ENCODE measurements at regions of chr2 and their contacts with region 1.

Region 1: DNA sequence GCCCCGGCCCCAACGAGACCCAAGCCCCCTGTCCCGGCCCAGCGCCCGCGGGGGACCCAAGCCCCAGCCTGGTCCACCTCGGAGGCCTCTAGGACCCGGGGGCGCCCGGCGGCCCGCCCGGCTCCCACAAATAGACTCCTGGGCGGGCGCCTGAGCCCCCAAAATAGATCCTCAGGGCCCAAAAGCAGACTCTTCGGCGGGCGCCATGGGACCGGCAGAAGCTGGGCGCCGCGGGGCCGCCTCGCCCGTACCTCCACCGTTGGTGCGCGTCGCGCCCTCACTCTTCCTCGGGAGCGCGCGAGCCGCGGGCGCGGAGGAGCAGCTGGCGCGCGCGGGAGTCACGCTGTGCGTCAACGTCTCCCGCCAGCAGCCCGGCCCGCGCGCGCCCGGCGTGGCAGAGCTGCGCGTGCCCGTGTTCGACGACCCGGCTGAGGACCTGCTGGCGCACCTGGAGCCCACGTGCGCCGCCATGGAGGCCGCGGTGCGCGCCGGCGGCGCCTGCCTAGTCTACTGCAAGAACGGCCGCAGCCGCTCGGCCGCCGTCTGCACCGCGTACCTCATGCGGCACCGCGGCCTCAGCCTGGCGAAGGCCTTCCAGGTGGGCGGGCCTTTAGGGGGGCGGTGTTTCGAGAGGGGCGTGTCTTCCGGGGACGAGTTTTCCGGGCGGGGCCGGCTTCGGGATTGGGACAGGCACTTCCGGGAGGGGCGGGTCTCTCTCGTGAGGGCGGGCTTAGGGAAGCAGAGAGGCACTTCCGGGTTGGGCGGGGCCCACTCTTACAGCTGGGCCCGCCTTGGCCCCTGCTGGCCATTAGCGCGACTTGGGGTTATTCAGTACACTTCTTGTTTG is 546 bp downstream of the DUSP28 start:
- DNase-seq: peak in 13 of 14 experiments; percentile 99 to 100 (median 100)
- ATAC-seq: peak; percentile 50
- H3K4me3 ChIP-seq: peak overlapping the region; percentile 53
- H3K4me3 Mint-ChIP-seq: peak overlapping the region; percentile 90
- H3K27ac ChIP-seq: peak overlapping the region; percentile 62 to 95
- H3K27ac Mint-ChIP-seq: peak overlapping the region; percentile 98
- H3K4me1 ChIP-seq: peaks cover 87% of the 10 kb centered on the region
- H3K4me1 Mint-ChIP-seq: peaks cover 80% of the 10 kb centered on the region
- H3K27me3 ChIP-seq: no peaks in the 10 kb centered on the region
- H3K27me3 Mint-ChIP-seq: no peaks in the 10 kb centered on the region
- CTCF ChIP-seq: no peak

Region 2: DNA sequence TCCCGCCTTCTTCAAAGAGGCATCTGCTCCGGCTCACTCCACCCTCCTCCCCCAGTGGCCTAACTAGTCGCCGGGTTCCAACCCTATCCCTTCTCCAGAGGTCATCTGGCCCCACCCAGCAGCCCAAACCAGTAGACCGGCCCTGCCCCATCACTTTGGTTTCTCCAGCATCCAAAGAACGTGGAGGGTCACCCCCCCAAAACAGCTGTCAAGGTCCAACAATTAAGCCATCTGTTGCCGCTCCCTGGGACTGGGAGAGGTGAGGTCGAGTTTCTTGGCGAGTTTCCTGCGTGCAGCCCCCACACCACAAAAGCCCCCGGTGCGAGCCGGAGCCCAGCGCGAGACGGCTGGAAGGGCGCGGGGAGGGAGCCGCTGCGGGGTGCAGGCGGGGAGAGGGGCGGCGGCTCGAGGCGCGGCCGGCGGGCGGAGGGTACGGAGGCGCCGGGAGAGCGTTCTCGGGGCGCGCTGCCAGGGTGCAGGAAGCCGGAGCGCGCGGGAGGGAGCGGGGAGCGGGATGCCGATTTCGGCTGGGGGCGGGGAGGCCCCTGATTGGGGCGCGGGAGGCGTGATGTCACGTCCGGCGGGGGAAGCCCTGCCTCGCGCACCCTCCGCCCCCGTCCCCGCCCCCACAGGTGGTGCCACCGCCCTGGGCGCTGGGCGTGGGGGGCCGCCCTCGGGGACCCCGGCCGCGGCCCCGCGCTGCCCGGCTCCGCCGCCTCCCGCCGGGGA is 125.8 kb before region 1 on chr2:
- CTCF ChIA-PET with region 1: no interaction called
- POLR2A ChIA-PET with region 1: no interaction called
- intact Hi-C with region 1: loop called in 1 of 2 experiments (anchors 5 kb)
- DNase-seq: peak; percentile 76 to 95 (median 89)
- ATAC-seq: peak; percentile 83
- H3K4me3 ChIP-seq: peak overlapping the region; percentile 51
- H3K4me3 Mint-ChIP-seq: peak overlapping the region; percentile 93
- H3K27ac ChIP-seq: no peak overlapping the region
- H3K27ac Mint-ChIP-seq: peak overlapping the region; percentile 61
- H3K4me1 ChIP-seq: peaks cover 25% of the 10 kb centered on the region
- H3K4me1 Mint-ChIP-seq: peaks cover 4% of the 10 kb centered on the region
- H3K27me3 ChIP-seq: peaks cover 22 to 27% of the 10 kb centered on the region in 2 experiments
- H3K27me3 Mint-ChIP-seq: peaks cover 22% of the 10 kb centered on the region
- CTCF ChIP-seq: no peak

Region 3: DNA sequence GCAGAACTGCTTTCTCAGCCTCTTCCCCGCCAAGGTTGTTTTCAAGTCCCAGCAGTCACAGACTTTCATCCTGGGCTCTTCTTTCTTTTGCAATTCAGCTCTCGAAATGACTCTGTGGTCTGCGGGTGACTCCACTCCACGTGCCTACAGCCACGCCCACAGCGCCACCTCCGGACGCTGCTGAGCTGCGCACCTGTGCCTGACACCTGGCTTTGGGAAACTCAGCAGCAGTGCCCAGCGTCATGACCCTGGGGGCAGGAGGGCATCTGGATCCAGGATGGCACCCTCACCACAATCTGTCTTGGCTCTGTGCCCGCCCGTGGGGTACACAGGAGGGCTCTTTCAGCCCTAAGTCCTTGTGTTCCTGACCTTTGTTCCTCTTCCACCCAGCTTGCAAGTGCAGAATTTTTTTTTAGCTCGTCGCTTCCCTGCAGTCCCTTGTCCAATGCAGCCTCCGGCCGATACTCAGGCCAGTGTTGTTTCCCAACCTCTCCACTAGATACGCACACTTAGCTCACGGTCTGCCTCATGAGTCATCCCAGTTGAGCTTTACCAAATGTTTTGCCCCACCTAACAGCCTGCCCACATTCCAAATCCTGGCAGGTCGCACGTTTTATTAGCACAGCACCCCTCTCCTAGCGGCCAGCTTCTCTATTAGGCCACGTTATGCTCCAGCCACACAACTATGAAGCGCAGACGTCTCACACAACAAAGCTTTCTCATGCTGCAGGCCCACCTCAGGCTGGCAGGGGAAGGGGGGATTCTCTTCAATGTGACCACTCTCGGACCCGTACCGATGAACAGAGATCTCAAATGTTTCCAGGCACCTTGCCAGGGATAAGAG is 19.3 kb after region 1 on chr2:
- CTCF ChIA-PET with region 1: interaction called, 54 read pairs
- POLR2A ChIA-PET with region 1: interaction called, 224 read pairs
- intact Hi-C with region 1: loop called in 1 of 2 experiments (anchors 1 kb)
- DNase-seq: peak; percentile 68 to 93 (median 78)
- ATAC-seq: peak; percentile 97
- H3K4me3 ChIP-seq: no peak overlapping the region
- H3K4me3 Mint-ChIP-seq: peak overlapping the region; percentile 18
- H3K27ac ChIP-seq: peak overlapping the region; percentile 59 to 69
- H3K27ac Mint-ChIP-seq: peak overlapping the region; percentile 77
- H3K4me1 ChIP-seq: peaks cover 57% of the 10 kb centered on the region
- H3K4me1 Mint-ChIP-seq: peaks cover 33% of the 10 kb centered on the region
- H3K27me3 ChIP-seq: no peaks in the 10 kb centered on the region
- H3K27me3 Mint-ChIP-seq: no peaks in the 10 kb centered on the region
- CTCF ChIP-seq: peak; percentile 66

Region 4: DNA sequence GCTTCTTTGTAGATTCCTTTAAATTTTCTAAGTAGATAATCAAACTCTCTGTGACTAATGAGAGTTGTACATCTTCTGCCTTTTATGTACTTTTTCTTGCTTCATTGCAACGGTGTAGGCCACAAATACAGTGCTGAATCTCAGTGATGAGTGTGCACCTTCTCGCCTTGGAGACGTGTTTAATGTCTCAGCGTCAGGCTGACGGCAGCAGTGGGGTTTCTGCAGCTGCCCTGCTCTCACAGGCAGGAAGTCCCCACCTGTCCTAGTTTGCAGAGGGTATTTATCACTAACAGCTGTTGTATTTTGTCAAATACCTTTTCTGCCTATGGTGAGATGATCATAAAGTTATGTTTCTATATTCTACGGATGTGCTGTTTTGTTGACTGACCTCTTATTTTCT is 321.2 kb after region 1 on chr2:
- CTCF ChIA-PET with region 1: no interaction called
- POLR2A ChIA-PET with region 1: no interaction called
- intact Hi-C with region 1: no loop called
- DNase-seq: peak in 1 of 14 experiments; percentile 9
- ATAC-seq: no peak
- H3K4me3 ChIP-seq: no peak overlapping the region
- H3K4me3 Mint-ChIP-seq: no peak overlapping the region
- H3K27ac ChIP-seq: no peak overlapping the region
- H3K27ac Mint-ChIP-seq: no peak overlapping the region
- H3K4me1 ChIP-seq: no peaks in the 10 kb centered on the region
- H3K4me1 Mint-ChIP-seq: no peaks in the 10 kb centered on the region
- H3K27me3 ChIP-seq: no peaks in the 10 kb centered on the region
- H3K27me3 Mint-ChIP-seq: peaks cover 5% of the 10 kb centered on the region
- CTCF ChIP-seq: no peak

Region 5: GRCh38 chr2:241217320-241218031 is 656.8 kb after region 1 on chr2:
- CTCF ChIA-PET with region 1: no interaction called
- POLR2A ChIA-PET with region 1: no interaction called
- intact Hi-C with region 1: loop called in 1 of 2 experiments (anchors 10 kb)
- DNase-seq: peak in 8 of 14 experiments; percentile 8 to 71 (median 20)
- ATAC-seq: peak; percentile 33
- H3K4me3 ChIP-seq: peak overlapping the region; percentile 52
- H3K4me3 Mint-ChIP-seq: peak overlapping the region; percentile 88
- H3K27ac ChIP-seq: no peak overlapping the region
- H3K27ac Mint-ChIP-seq: peak overlapping the region; percentile 80
- H3K4me1 ChIP-seq: peaks cover 13% of the 10 kb centered on the region
- H3K4me1 Mint-ChIP-seq: peaks cover 23% of the 10 kb centered on the region
- H3K27me3 ChIP-seq: no peaks in the 10 kb centered on the region
- H3K27me3 Mint-ChIP-seq: no peaks in the 10 kb centered on the region
- CTCF ChIP-seq: no peak

Measured in CD4-positive, alpha-beta T cell (primary cell).